ENCODE measurements at regions of chr2 and their contacts with region 1.

Region 1: GRCh38 chr2:38274286-38275276 is 102.5 kb downstream of the ATL2 start:
- DNase-seq: peak in 18 of 35 experiments; percentile 4 to 62 (median 10)
- ATAC-seq: peak in 3 of 4 experiments; percentile 38 to 57 (median 43)
- H3K4me3 ChIP-seq: no peak overlapping the region
- H3K4me3 Mint-ChIP-seq: no peak overlapping the region
- H3K27ac ChIP-seq: no peak overlapping the region
- H3K27ac Mint-ChIP-seq: no peak overlapping the region
- H3K4me1 ChIP-seq: no peaks in the 10 kb centered on the region
- H3K4me1 Mint-ChIP-seq: peaks cover 0 to 2% (median 2%) of the 10 kb centered on the region in 3 donors
- H3K27me3 ChIP-seq: peaks cover 0 to 3% of the 10 kb centered on the region in 2 experiments
- H3K27me3 Mint-ChIP-seq: no peaks in the 10 kb centered on the region

Region 2: DNA sequence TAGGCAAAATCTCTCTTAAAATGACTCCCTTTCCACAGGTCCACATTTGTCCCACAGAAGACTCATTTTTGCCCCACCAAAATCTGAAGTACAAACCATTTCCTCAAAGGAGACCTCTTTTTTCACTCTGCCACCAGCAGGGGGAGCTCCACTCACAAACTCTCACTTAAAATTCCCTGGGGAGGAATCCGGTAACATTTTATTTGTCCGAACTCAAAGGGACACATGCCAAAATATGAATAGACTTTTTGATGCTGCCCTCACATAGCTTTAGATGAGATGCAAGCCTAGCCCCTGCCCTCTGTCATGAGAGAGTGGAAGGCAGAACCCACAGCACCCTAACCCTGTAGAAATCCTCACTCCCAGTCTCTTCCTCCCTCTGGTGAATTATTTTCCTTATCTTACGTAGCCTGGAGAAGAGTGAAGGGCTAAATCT is 292.4 kb before region 1 on chr2:
- CTCF ChIA-PET with region 1: interaction called, 4 to 10 read pairs
- POLR2A ChIA-PET with region 1: no interaction called
- DNase-seq: peak in 29 of 35 experiments; percentile 4 to 71 (median 34)
- ATAC-seq: no peak
- H3K4me3 ChIP-seq: no peak overlapping the region
- H3K4me3 Mint-ChIP-seq: no peak overlapping the region
- H3K27ac ChIP-seq: no peak overlapping the region
- H3K27ac Mint-ChIP-seq: no peak overlapping the region
- H3K4me1 ChIP-seq: no peaks in the 10 kb centered on the region
- H3K4me1 Mint-ChIP-seq: peaks cover 0 to 7% (median 4%) of the 10 kb centered on the region in 3 donors
- H3K27me3 ChIP-seq: no peaks in the 10 kb centered on the region
- H3K27me3 Mint-ChIP-seq: peaks cover 0 to 4% of the 10 kb centered on the region in 2 donors

Region 3: DNA sequence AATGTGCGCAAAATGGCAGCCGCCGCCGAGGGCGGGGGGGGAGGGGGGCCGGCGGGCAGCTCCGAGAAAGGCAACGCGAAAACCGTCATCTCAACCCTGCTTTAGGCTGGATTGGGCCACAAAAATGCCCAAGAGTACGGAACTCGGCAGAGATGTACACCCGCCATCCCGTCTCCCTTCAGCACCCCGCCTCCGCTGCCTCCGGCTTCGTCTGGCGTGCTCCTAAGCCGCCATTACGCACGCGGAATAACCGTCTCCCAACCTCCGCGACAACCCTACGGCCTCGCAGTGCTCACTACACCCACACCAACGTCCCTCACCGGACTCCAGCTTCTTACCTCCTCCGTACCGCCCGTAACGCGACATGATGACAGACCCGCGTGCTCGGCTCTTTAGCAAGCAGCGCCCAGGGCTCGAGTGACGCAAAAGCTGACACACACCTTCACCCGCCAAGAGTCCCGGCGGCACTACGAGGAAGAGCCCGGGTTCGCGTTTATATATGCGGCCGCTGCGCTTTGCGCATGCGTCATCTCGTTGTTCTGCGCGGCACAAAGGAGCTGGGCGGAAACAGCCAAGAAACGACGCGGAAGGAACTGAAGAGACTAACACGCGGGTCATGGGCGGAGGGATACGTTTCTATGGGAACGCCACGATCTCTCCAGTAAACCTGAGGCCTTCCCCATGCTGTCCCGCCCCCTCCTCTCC is 476.5 kb after region 1 on chr2 and contains the start of gene SRSF7:
- CTCF ChIA-PET with region 1: no interaction called
- POLR2A ChIA-PET with region 1: no interaction called
- DNase-seq: peak; percentile 94 to 99 (median 97)
- ATAC-seq: peak; percentile 78 to 87 (median 82)
- H3K4me3 ChIP-seq: peak within 1 kb of the TSS; percentile 89 to 95
- H3K4me3 Mint-ChIP-seq: peak within 1 kb of the TSS; percentile 99 to 100 (median 100)
- H3K27ac ChIP-seq: peak within 1 kb of the TSS; percentile 96
- H3K27ac Mint-ChIP-seq: peak within 1 kb of the TSS; percentile 99 to 100
- H3K4me1 ChIP-seq: peaks cover 36 to 46% of the 10 kb centered on the region in 2 experiments
- H3K4me1 Mint-ChIP-seq: peaks cover 52 to 66% (median 62%) of the 10 kb centered on the region in 3 donors
- H3K27me3 ChIP-seq: no peaks in the 10 kb centered on the region
- H3K27me3 Mint-ChIP-seq: peaks cover 0 to 3% of the 10 kb centered on the region in 2 donors
- total RNA-seq, gene SRSF7: 252 to 649 (median 265) TPM

Measured in T-cell (primary cell).